GM10248 (cell line): ENCODE measurements at regions of chrX and their contacts with region 1.

Region 1: DNA sequence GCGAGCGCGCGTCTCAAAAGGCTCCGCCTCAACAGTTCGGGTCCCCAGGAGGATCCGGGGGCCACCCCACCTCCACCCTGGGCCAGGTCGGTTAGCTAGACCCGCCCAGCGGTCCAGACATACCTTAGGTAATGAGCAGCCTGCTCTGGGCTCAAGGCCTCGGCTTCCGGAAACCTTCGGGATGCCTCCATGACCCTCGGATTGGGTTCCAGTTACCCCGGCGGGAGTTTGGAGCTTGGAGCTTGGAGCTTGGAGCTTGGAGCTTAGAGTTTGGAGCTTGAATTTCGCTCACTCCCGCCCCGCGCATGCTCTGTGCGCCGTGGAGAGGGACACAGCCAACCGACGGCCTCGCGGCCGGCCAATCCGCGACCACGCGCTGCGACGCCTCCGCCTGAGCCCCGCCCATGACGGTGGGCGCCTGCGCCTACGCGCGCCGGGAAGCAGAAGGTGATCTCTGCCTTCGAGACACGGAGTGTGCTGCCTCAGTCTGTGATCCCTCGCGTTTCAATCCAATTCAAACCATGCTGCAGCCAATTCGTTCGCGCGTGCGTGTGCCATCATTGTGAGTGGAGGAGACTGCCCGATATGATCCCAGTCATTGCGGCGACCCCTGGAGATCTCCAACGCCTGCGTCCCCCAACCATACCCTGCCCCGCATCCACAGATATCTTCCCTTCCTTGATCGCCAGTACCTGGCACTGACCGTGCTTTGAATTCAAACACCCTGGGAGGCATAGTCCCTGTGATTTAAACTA is at the start of gene ERCC6L:
- DNase-seq: peak; percentile 93
- CTCF ChIP-seq: no peak

Region 2: DNA sequence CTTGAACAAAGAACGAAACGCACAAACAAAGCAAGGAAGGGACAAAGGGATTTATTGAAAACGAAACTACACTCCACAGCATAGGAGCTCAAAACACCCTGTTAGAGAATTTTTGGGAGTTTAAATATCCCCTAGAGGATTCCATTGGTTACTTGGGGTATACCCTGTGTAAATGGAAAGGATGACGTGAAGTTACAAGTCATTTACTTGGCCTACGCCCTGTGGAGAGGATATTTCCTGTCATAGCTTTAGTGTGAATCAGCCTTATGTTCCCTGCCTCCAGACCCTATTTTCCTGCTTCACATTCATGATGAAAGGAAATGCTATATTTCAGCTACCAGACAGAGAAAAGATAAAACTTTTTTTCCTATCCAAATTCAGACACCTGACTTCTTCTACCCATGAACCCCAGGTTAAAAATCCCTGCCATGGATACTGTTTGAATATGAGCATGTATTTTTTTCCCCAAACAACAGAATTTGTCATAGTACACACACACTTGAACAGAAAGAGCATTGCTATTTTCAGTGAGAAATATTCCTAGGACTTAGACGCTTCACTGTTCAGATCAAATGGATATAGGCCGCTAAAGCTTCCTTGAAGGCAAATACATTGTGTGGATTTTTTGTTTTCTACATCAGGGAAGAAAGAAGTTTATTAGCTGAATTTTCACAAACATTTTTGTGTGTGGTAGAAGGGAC is 36.9 kb before region 1 on chrX:
- CTCF ChIA-PET with region 1: no interaction called
- POLR2A ChIA-PET with region 1: no interaction called
- DNase-seq: no peak
- CTCF ChIP-seq: no peak

Region 3: GRCh38 chrX:72276478-72276953 is 37.6 kb after region 1 on chrX:
- CTCF ChIA-PET with region 1: interaction called, 3 read pairs
- POLR2A ChIA-PET with region 1: interaction called, 13 read pairs
- DNase-seq: no peak
- CTCF ChIP-seq: no peak